ENCODE measurements at regions of chr2 and their contacts with region 1.

Region 1: GRCh38 chr2:111194835-111195621 is 74.3 kb downstream of the BCL2L11 start:
- DNase-seq: no peak
- H3K4me3 Mint-ChIP-seq: no peak overlapping the region
- H3K27ac Mint-ChIP-seq: no peak overlapping the region
- H3K4me1 Mint-ChIP-seq: peaks cover 10% of the 10 kb centered on the region
- H3K27me3 Mint-ChIP-seq: no peaks in the 10 kb centered on the region
- CTCF ChIP-seq: no peak

Region 2: DNA sequence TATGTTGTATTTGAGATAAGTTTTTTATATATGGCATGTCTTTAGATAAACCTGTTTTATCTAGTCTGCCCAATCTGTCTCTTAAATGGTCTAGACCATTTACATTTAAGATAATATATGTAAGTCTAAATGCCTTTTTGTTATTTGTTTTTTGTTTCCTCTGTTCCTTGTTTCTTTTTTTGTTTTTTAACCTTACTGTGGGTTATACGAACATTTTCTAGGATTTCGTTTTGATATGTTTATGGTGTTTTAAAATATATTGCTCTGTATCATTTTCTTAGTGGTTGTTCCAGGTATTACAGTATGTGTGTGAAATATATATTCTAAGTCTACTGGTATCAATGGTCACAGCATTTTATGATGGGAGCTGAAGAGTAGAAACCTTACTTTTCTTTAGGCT is 61.0 kb before region 1 on chr2:
- CTCF ChIA-PET with region 1: no interaction called
- intact Hi-C with region 1: loop called (anchors 5 kb)
- DNase-seq: no peak
- H3K4me3 Mint-ChIP-seq: no peak overlapping the region
- H3K27ac Mint-ChIP-seq: no peak overlapping the region
- H3K4me1 Mint-ChIP-seq: peaks cover 7% of the 10 kb centered on the region
- H3K27me3 Mint-ChIP-seq: no peaks in the 10 kb centered on the region
- CTCF ChIP-seq: no peak

Measured in Calu3 (cell line).